MCF 10A (cell line): ENCODE measurements at regions of chr11 and their contacts with region 1.

Region 1: DNA sequence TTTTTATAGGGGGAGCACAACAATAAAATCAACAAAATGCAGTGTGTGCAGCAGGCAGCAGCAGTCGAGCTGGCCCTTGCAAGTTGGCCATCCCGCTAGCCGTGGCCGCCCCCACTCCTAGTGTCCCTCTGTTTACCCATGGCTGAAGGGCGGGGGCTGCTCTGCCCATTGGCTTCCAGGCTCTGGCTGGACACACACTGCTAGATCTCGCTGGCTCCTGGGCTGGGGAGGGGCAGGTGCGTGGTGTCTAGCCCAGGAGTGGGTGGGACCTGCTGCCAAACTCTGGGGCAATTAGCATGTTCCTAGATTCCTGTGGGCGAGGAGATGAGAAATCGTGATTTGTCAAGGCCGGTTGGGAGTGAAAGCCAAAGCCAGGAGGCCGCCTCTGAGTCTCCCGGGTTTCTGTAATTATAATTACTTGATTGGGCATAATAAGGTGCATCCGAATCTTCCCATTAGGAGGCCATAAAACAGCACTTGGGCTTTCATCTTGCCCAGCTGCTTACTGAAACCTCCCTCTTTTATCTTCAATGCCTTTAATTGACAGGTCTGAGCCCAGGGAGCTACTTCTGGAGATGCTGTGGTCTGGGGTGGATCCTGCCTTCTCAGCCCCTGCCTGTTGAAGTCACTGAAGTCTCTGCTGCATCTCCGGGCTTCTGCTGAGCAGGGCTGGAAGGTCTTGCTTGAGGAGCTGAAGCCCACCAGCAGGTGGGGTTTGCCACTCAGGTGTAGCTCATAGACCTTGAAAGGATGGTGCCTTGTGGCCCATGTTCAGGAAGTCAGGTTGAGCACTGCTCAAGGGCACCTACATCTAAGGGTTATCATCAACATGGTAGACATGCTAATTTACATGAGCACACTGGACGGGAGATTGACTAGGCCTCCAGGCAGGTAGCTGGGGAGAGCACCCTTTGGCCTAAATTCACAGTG is 44.5 kb upstream of the DKK3 start:
- DNase-seq: peak; percentile 60
- H3K4me3 Mint-ChIP-seq: no peak overlapping the region
- H3K27ac Mint-ChIP-seq: peak overlapping the region; percentile 10
- H3K4me1 Mint-ChIP-seq: peaks cover 30% of the 10 kb centered on the region
- H3K27me3 Mint-ChIP-seq: no peaks in the 10 kb centered on the region
- CTCF ChIP-seq: no peak

Region 2: GRCh38 chr11:11821899-11822298 is 231.0 kb before region 1 on chr11:
- CTCF ChIA-PET with region 1: no interaction called
- POLR2A ChIA-PET with region 1: no interaction called
- intact Hi-C with region 1: no loop called
- DNase-seq: no peak
- H3K4me3 Mint-ChIP-seq: no peak overlapping the region
- H3K27ac Mint-ChIP-seq: no peak overlapping the region
- H3K4me1 Mint-ChIP-seq: no peaks in the 10 kb centered on the region
- H3K27me3 Mint-ChIP-seq: no peaks in the 10 kb centered on the region
- CTCF ChIP-seq: no peak

Region 3: GRCh38 chr11:12100841-12101242 is 47.9 kb after region 1 on chr11:
- CTCF ChIA-PET with region 1: interaction called, 18 read pairs
- POLR2A ChIA-PET with region 1: no interaction called
- intact Hi-C with region 1: loop called (anchors 2 kb)
- DNase-seq: no peak
- H3K4me3 Mint-ChIP-seq: no peak overlapping the region
- H3K27ac Mint-ChIP-seq: no peak overlapping the region
- H3K4me1 Mint-ChIP-seq: peaks cover 11% of the 10 kb centered on the region
- H3K27me3 Mint-ChIP-seq: no peaks in the 10 kb centered on the region
- CTCF ChIP-seq: no peak

Region 4: DNA sequence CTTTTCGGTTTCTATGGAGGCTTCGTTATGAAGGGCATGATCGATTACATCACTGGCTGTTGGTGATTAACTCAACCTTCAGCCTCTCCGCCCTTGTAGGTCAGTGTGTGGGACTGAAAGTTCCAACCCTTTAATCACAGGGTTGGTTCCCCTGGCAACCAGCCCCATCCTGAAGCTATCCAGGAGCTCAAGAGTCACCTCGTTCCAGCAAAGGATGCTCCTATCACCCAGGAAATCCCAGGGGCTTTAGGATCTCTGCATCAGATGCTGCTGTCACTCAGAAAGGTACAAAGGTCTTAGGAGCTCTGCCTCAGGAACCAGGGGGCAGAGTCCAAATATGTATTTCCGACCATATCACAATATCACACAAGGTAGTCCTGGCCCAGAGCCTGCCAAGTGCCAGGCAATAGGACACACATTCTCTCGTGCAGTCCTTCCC is 200.9 kb after region 1 on chr11:
- CTCF ChIA-PET with region 1: interaction called, 12 read pairs
- POLR2A ChIA-PET with region 1: no interaction called
- intact Hi-C with region 1: no loop called
- DNase-seq: no peak
- H3K4me3 Mint-ChIP-seq: no peak overlapping the region
- H3K27ac Mint-ChIP-seq: no peak overlapping the region
- H3K4me1 Mint-ChIP-seq: peaks cover 15% of the 10 kb centered on the region
- H3K27me3 Mint-ChIP-seq: no peaks in the 10 kb centered on the region
- CTCF ChIP-seq: no peak